ENCODE measurements at regions of chr5 and their contacts with region 1.

Region 1: GRCh38 chr5:72307968-72308852 is 11.8 kb downstream of the MRPS27 start:
- DNase-seq: peak; percentile 98
- H3K4me3 ChIP-seq: peak overlapping the region; percentile 73 to 96 (median 85)
- H3K27ac ChIP-seq: peak overlapping the region; percentile 88 to 95
- H3K4me1 ChIP-seq: peaks cover 4 to 33% (median 11%) of the 10 kb centered on the region in 4 experiments
- H3K27me3 ChIP-seq: no peaks in the 10 kb centered on the region

Region 2: GRCh38 chr5:72018146-72018803 is 289.9 kb before region 1 on chr5:
- CTCF ChIA-PET with region 1: no interaction called
- POLR2A ChIA-PET with region 1: no interaction called
- DNase-seq: peak; percentile 43 to 69 (median 58)
- H3K4me3 ChIP-seq: no peak overlapping the region
- H3K27ac ChIP-seq: no peak overlapping the region
- H3K4me1 ChIP-seq: no peaks in the 10 kb centered on the region
- H3K27me3 ChIP-seq: peaks cover 0 to 9% (median 2%) of the 10 kb centered on the region in 5 experiments

Region 3: GRCh38 chr5:72134226-72134899 is 173.8 kb before region 1 on chr5:
- CTCF ChIA-PET with region 1: interaction called, 22 read pairs
- POLR2A ChIA-PET with region 1: interaction called, 3 read pairs
- DNase-seq: peak in 2 of 3 donors; percentile 18 to 23
- H3K4me3 ChIP-seq: no peak overlapping the region
- H3K27ac ChIP-seq: no peak overlapping the region
- H3K4me1 ChIP-seq: peaks cover 1 to 17% (median 6%) of the 10 kb centered on the region in 4 experiments
- H3K27me3 ChIP-seq: peaks cover 20 to 81% (median 38%) of the 10 kb centered on the region in 5 experiments

Region 4: GRCh38 chr5:72319976-72320752 is 12.0 kb after region 1 on chr5 and contains the starts of genes MRPS27 and PTCD2:
- CTCF ChIA-PET with region 1: interaction called, 15 read pairs
- POLR2A ChIA-PET with region 1: interaction called, 10 read pairs
- DNase-seq: peak; percentile 99
- H3K4me3 ChIP-seq: peak within 1 kb of the TSS; percentile 56 to 97 (median 92)
- H3K27ac ChIP-seq: peak within 1 kb of the TSS; percentile 44 to 67
- H3K4me1 ChIP-seq: peaks cover 7 to 22% (median 13%) of the 10 kb centered on the region in 4 experiments
- H3K27me3 ChIP-seq: no peaks in the 10 kb centered on the region

Region 5: DNA sequence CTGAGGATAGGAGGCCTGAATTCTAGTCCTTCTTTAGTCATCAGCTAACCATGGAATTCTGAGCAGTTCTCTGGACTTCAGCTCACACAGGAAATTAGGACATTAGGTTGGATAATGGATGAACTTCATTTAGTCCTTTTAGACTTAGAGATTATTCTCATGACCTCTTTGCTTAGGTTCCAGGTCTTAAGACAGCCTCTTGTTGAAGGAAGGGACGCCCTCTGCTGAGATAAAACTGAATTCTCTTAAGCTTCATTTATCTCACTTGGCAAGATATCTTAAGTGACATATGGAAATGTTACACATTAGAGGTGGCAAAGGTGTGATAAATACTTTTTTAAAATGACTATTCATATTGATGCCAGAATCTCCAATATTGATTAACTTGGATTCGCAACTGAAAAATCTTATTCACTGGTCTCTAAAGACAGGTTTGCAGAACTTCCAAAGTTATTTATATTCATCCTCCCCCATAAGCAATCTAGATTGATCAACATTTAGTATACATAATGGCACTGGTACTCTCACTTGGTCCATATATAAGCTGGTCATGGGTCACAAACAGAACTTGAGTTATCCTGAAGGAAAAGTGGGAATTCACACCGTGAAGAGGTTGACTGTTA is 215.9 kb after region 1 on chr5:
- CTCF ChIA-PET with region 1: no interaction called
- POLR2A ChIA-PET with region 1: no interaction called
- DNase-seq: peak; percentile 81 to 87 (median 84)
- H3K4me3 ChIP-seq: no peak overlapping the region
- H3K27ac ChIP-seq: no peak overlapping the region
- H3K4me1 ChIP-seq: peaks cover 0 to 7% (median 0%) of the 10 kb centered on the region in 4 experiments
- H3K27me3 ChIP-seq: no peaks in the 10 kb centered on the region

Measured in common myeloid progenitor, CD34-positive (primary cell).